Posterior vena cava (tissue), 2 donors: ENCODE measurements at regions of chr14 and their contacts with region 1.

Region 1: DNA sequence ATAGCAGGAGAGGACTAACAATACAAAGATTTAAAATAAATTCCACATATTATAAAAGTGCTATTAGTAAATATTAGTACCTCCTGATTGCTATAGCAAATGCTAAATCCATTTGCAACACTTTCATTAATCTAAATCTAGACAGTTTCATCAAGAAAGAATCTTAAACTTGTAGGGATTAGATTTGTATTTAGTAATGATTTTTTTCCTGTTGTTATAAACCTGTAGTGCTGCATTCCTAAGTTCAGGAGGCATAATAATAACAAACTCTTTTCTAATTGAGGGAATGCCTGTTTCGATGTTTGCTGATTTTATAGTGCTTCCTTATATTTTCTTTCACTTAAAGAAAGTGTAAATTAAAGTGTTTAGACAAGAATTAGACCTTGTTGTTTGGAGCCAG is 166.1 kb downstream of the FOXA1 start:
- DNase-seq: no peak

Region 2: DNA sequence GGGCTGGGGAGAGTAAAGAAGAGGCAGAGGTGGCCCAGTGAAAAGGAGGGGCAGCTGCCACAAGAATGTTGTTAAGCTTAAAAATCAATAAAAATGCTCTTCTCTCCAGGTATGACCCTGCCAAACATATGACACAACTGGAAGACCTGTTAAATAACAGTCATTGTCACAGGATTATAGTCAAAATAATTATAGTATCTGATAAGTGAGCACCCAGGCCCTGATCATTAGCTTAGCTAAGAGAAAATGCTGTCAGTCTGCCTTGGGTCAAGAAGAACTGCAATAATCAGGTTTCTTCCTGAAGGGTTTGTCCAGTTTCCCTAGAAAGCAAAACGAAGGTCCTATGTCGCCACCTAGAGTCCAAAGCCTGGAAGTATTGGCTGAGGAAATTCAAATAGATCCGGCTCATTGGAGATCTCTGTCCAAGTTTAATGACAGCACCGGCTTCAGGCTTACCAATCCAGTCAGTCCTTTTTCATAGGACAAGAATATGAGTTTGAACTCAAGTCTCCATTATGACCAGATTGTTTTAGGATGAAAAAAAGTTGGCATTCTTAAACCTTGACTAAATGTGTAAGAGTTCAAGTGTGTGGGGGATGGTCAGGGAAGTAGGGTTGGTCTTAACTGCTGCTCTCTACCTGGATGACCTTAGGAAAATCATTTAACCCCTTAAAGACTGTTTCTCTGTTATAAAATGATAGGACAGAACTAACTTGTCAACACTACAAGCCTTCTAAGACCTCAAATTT is 824.0 kb before region 1 on chr14:
- intact Hi-C with region 1: loop called in 1 of 2 experiments (anchors 5 kb)
- DNase-seq: no peak